ENCODE measurements at regions of chr14 and their contacts with region 1.

Region 1: GRCh38 chr14:100375963-100376735 is 53.0 kb downstream of the SLC25A47 start:
- DNase-seq: peak; percentile 75 to 96
- ATAC-seq: peak; percentile 93 to 97
- H3K4me3 ChIP-seq: peak within 1 kb of the TSS; percentile 94
- H3K27ac ChIP-seq: peak within 1 kb of the TSS; percentile 89 to 94
- H3K4me1 ChIP-seq: peaks cover 21% of the 10 kb centered on the region
- CTCF ChIP-seq: no peak
- EP300 ChIP-seq: no peak
- POLR2A ChIP-seq: peak; percentile 60
- RAD21 ChIP-seq: no peak

Region 2: DNA sequence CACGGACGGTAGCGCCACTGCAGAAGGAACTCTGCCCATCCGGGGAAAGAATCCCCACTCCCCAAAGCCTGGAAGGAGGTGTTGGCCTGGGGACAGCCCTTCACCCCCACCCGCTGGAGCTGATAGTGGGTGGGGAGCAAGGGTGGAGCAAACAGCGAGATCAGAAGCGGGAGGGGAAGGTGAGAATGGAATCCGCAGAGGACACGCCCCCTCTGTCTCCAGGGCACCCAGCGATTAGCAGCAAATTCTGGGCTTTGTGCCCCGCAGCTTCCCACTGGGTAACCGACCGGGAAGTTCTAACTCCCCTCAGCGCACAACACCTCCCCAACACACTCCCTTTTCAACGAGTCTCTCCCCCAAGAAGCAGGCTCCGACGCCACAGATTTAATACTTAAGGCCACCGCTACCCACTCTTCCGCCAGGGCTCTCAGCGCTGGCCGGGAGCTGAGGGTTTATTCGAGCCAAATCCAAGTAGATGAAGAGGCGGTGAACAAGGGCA is 71.3 kb before region 1 on chr14:
- CTCF ChIA-PET with region 1: interaction called, 17 read pairs
- POLR2A ChIA-PET with region 1: no interaction called
- DNase-seq: peak; percentile 35 to 36
- ATAC-seq: peak; percentile 7 to 37; a peak in 5 of 6 replicates
- H3K4me3 ChIP-seq: peak overlapping the region; percentile 88
- H3K27ac ChIP-seq: peak overlapping the region; percentile 68 to 91; a peak in 4 of 6 replicates
- H3K4me1 ChIP-seq: peaks cover 29% of the 10 kb centered on the region
- CTCF ChIP-seq: no peak
- EP300 ChIP-seq: no peak
- POLR2A ChIP-seq: no peak
- RAD21 ChIP-seq: no peak

Region 3: DNA sequence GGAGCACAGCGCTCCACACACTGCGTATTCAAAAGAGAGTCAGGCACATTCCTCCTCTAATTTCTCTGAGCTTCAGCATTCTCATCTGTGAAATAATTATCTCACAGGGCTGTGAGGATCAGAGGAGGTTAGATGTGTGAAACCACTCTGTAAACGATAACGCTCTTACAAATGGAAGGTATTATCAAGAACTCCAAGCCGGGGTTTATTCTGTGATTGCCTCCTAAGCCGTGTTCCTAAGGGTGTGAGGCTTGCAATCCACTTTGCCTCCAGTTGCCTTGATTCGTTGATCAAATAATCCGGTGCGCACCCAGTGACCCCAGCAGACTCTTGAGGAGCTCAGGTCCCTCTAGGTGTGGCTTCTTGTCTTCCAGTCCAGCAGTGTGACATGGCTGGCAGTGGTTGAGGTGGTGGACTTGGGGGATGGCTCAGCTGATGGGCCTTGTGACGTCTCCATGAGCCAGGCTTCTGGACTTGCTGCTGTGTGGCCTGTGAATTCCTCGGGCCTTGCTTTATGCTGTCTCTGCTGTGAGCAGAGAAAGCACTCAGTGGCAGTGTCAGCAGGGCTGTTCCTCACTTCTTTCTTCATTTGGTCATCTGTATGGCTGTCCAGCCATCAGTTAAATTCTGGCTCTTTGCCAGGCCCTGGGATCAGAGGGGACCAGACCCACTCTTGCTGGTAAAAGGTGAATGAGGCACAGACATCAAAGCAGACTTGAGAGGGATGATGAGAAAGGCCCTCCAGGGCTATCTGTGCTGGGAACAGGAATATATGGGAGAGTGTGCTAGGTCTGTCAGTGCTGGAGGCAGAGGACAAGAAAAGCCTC is 18.0 kb after region 1 on chr14:
- CTCF ChIA-PET with region 1: interaction called, 10 read pairs
- POLR2A ChIA-PET with region 1: interaction called, 3 read pairs
- DNase-seq: no peak
- ATAC-seq: no peak
- H3K4me3 ChIP-seq: no peak overlapping the region
- H3K27ac ChIP-seq: peak overlapping the region in 1 of 2 experiments; percentile 43; a peak in 2 of 6 replicates
- H3K4me1 ChIP-seq: peaks cover 42% of the 10 kb centered on the region
- CTCF ChIP-seq: no peak
- EP300 ChIP-seq: no peak
- POLR2A ChIP-seq: no peak
- RAD21 ChIP-seq: no peak